Left cardiac atrium (tissue), 4 donors: ENCODE measurements at regions of chr3 and their contacts with region 1.

Region 1: DNA sequence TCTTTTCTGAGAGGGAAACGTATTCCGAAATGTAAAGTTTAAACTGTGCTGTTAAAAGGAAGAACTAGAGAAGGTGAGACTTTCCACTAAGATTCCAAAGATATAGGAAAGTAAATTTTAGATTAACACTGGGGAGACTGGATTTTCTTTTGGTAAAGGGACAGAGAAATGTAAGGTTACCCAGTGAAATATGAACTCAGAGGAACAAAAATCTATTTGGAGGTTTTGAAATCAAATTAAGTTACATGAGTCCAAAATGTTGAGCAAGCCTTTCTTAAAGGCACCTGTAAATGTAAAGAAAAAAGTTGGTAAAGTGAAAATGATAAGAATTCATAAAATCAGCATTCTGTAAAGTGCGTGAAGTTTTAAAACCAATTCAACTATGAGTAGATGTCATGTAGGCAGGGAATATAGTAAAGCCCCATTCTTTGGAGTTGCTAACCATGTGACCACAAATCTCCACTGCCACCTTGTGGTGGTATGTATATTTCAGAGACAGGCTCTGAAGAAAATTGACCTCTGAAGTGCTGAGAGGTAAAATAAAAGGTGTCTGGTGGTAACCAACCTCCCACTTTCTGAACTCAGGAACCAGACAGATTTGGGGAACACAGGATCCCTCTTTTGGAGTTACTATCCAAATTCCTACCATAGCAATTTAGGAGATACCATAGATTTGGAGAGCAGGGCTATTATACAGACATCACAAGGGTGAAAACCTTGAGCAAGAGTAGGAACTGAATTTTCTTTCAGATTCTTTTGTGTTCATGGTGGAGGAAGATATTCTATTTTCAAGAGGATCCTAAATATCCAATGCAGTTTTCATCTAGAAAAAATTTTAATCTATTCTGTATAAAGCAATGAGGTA is 215.3 kb downstream of the ROBO2 start:
- DNase-seq: no peak
- ATAC-seq: peak in 1 of 2 donors; percentile 62

Region 2: GRCh38 chr3:76024640-76025039 is 1230.6 kb before region 1 on chr3:
- intact Hi-C with region 1: loop called in 1 of 2 experiments (anchors 10 kb)
- DNase-seq: no peak
- ATAC-seq: no peak

Region 3: GRCh38 chr3:77038468-77038929 is 216.7 kb before region 1 on chr3:
- intact Hi-C with region 1: loop called (anchors 2 to 5 kb)
- DNase-seq: peak; percentile 69
- ATAC-seq: peak; percentile 94